A673 (cell line): ENCODE measurements at regions of chr1 and their contacts with region 1.

Region 1: DNA sequence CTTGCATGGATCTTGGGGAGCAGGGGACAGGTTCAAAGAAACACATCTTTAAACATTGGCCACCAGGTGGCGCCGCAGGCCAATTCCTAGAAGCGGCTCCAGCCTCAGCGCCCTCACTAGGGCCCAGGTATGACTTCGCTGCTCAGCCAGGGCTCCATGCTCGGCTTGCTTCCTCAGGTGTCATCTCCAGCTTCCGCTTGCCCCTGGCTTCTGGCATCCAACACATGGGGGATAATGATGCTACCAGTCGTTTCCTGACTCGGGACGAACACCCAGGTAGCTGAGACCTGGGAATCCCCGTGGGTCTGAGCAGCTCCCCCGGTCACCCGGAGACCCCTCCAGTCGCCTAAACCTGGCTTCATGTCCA is 8.5 kb upstream of the MEX3A start:
- DNase-seq: peak; percentile 87
- H3K4me3 ChIP-seq: no peak overlapping the region
- H3K27ac ChIP-seq: no peak overlapping the region
- H3K4me1 ChIP-seq: peaks cover 16% of the 10 kb centered on the region
- H3K27me3 ChIP-seq: no peaks in the 10 kb centered on the region
- CTCF ChIP-seq: peak; percentile 86

Region 2: GRCh38 chr1:156212833-156213643 is 122.2 kb after region 1 on chr1 and contains the start of gene PMF1:
- CTCF ChIA-PET with region 1: no interaction called
- POLR2A ChIA-PET with region 1: no interaction called
- intact Hi-C with region 1: loop called (anchors 5 kb)
- DNase-seq: peak; percentile 99
- H3K4me3 ChIP-seq: peak within 1 kb of the TSS; percentile 64
- H3K27ac ChIP-seq: peak within 1 kb of the TSS; percentile 99
- H3K4me1 ChIP-seq: peaks cover 10% of the 10 kb centered on the region
- H3K27me3 ChIP-seq: no peaks in the 10 kb centered on the region
- CTCF ChIP-seq: no peak
- total RNA-seq, gene PMF1: 89.6 and 96.6 TPM in 2 replicates